A549 (cell line): ENCODE measurements at regions of chr2 and their contacts with region 1.

Region 1: DNA sequence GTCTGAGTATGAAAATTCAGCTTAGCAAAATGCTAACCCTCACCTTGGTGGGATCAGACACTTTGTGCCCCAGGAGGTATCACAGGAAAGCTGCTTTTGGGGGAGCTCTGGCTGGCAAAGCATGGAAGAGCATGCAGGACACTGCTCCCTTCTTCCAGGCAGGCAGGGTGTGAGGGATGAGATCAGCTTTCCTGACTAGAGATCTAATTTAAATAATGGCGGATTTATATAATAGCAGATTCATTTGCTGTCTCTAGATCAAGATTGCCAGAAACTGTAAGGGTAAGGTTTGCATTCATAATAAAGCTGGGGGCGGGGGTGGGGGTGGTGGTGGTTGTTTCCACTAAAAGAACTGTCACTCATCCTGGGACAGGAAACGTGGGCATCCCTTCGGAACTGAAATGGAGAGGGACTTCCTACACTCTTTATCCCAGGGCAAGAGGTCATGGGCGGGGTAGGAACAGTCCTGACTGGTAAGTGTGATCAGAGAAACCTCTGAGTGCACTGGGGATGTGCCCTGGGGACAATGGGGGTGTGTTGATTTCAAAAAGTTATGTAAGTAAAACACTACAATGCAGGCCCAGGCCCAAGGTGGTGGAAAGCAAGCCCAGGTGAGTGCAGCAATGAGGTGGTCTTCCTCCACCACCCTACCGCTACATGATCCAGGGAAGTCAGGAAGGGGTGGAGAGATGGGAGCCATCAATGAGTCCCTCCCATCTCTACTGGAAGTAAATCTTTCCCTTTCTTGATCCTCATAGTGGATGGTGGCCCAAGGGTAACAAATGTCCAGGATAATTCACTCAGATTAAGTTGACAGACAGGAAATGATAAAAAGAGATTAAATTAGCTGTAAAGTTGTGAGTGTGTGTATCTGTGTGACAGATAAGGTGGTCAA is 171.4 kb upstream of the SERPINE2 start:
- DNase-seq: no peak
- ATAC-seq: no peak
- H3K4me3 ChIP-seq: no peak overlapping the region
- H3K27ac ChIP-seq: no peak overlapping the region
- H3K4me1 ChIP-seq: peaks cover 4% of the 10 kb centered on the region; the same call in 1 of the 3 replicates
- CTCF ChIP-seq: no peak
- EP300 ChIP-seq: no peak
- POLR2A ChIP-seq: no peak
- RAD21 ChIP-seq: no peak

Region 2: GRCh38 chr2:224086226-224086914 is 124.2 kb before region 1 on chr2:
- CTCF ChIA-PET with region 1: no interaction called
- POLR2A ChIA-PET with region 1: interaction called, 11 read pairs
- DNase-seq: peak; percentile 57 to 73
- ATAC-seq: peak; percentile 90
- H3K4me3 ChIP-seq: no peak overlapping the region
- H3K27ac ChIP-seq: peak overlapping the region; percentile 65 to 75
- H3K4me1 ChIP-seq: peaks cover 29% of the 10 kb centered on the region
- CTCF ChIP-seq: no peak
- EP300 ChIP-seq: peak; percentile 33 to 57; a peak in 2 of 5 replicates
- POLR2A ChIP-seq: no peak
- RAD21 ChIP-seq: no peak

Region 3: GRCh38 chr2:224938651-224939182 is 728.2 kb after region 1 on chr2:
- CTCF ChIA-PET with region 1: no interaction called
- POLR2A ChIA-PET with region 1: no interaction called
- DNase-seq: no peak
- ATAC-seq: no peak
- H3K4me3 ChIP-seq: no peak overlapping the region
- H3K27ac ChIP-seq: no peak overlapping the region
- H3K4me1 ChIP-seq: no peaks in the 10 kb centered on the region
- CTCF ChIP-seq: no peak
- EP300 ChIP-seq: no peak
- POLR2A ChIP-seq: no peak
- RAD21 ChIP-seq: no peak